H1 (cell line): ENCODE measurements at regions of chr6 and their contacts with region 1.

Region 1: GRCh38 chr6:12595161-12595811 is 121.3 kb upstream of the PHACTR1 start:
- DNase-seq: no peak
- H3K4me3 ChIP-seq: no peak overlapping the region
- H3K27ac ChIP-seq: no peak overlapping the region
- H3K4me1 ChIP-seq: peaks cover 0 to 2% (median 0%) of the 10 kb centered on the region in 4 experiments; a peak in 3 of 7 replicates
- H3K27me3 ChIP-seq: no peaks in the 10 kb centered on the region
- CTCF ChIP-seq: no peak
- EP300 ChIP-seq: no peak
- POLR2A ChIP-seq: no peak
- RAD21 ChIP-seq: no peak

Region 2: DNA sequence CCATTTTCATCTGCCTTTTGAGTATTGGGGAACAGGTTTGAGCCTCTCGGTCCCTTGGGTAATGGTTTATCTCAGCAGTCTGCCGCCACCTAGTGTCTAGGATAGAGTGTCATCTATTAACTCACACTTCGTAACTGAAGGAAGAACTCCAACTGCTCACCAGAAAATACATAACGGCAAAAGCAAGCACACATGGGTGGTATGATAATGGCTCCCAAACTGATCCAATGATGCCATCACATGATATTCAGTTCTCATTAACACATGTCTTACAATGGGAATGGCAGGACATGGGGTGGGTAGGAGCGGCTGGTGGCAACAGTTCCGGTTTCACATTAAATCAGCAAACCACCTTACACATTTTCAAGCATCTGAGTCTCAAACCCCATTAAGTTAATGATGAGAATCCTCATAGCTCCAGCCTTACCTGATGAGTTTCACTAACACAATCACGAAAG is 10.6 kb after region 1 on chr6:
- CTCF ChIA-PET with region 1: interaction called, 57 read pairs
- POLR2A ChIA-PET with region 1: no interaction called
- DNase-seq: peak in 1 of 2 experiments; percentile 55
- H3K4me3 ChIP-seq: no peak overlapping the region
- H3K27ac ChIP-seq: no peak overlapping the region
- H3K4me1 ChIP-seq: peaks cover 0 to 6% (median 1%) of the 10 kb centered on the region in 4 experiments; a peak in 2 of 7 replicates
- H3K27me3 ChIP-seq: no peaks in the 10 kb centered on the region
- CTCF ChIP-seq: peak in 2 of 3 experiments; percentile 75 to 81; a peak in 3 of 4 replicates
- EP300 ChIP-seq: no peak
- POLR2A ChIP-seq: no peak
- RAD21 ChIP-seq: peak; percentile 93